ENCODE measurements at regions of chr18 and their contacts with region 1.

Region 1: DNA sequence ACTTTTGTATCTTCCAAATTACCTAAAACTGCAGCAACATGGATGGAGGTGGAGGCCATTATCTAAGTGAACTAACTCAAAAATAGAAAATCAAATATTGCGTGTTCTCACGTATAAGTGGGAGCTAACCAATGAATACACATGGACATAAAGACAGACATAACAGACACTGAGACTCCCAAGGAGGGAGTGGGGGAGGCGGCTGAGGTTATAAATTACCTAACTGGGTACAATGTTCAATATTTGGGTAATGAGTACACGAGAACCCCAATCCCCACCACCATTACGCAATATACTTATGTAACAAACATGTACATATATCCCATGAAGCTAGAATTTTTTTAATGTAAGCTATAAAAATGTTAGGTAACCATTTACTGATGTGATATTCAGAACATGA is 119.8 kb downstream of the RTTN start:
- DNase-seq: no peak
- H3K4me3 ChIP-seq: no peak overlapping the region
- H3K27ac ChIP-seq: no peak overlapping the region
- H3K4me1 ChIP-seq: no peaks in the 10 kb centered on the region
- H3K27me3 ChIP-seq: no peaks in the 10 kb centered on the region
- CTCF ChIP-seq: no peak
- POLR2A ChIP-seq: no peak

Region 2: GRCh38 chr18:68854786-68855391 is 1230.8 kb before region 1 on chr18:
- intact Hi-C with region 1: loop called (anchors 5 kb)
- DNase-seq: no peak
- H3K4me3 ChIP-seq: no peak overlapping the region
- H3K27ac ChIP-seq: no peak overlapping the region
- H3K4me1 ChIP-seq: no peaks in the 10 kb centered on the region
- H3K27me3 ChIP-seq: no peaks in the 10 kb centered on the region
- CTCF ChIP-seq: no peak
- POLR2A ChIP-seq: no peak

Region 3: DNA sequence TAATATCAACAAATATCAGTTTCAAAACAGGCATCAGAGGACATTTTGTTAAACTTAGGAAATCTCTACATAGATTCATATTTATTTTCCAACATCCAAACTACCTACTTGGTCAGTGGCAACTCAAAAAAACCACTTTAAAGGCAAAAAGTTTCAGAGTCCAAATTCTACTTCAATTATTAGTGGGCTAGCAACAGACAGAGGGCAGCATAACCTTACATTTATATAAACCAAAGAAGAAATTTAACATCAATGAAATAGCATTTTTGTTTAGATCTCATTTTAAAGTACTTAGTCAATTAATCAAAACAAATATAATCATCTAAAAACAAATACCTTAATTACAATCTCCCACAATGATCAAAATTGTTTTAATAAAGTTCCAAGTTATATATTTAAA is 86.6 kb after region 1 on chr18:
- intact Hi-C with region 1: no loop called
- DNase-seq: no peak
- H3K4me3 ChIP-seq: no peak overlapping the region
- H3K27ac ChIP-seq: no peak overlapping the region
- H3K4me1 ChIP-seq: peaks cover 0 to 10% (median 2%) of the 10 kb centered on the region in 6 donors
- H3K27me3 ChIP-seq: no peaks in the 10 kb centered on the region
- CTCF ChIP-seq: no peak
- POLR2A ChIP-seq: no peak

Measured in spleen (tissue), 13 donors.